KBM-7 (cell line): ENCODE measurements at regions of chr1 and their contacts with region 1.

Region 1: GRCh38 chr1:204806943-204807687 is 63.5 kb upstream of the NFASC start:
- DNase-seq: peak; percentile 94

Region 2: DNA sequence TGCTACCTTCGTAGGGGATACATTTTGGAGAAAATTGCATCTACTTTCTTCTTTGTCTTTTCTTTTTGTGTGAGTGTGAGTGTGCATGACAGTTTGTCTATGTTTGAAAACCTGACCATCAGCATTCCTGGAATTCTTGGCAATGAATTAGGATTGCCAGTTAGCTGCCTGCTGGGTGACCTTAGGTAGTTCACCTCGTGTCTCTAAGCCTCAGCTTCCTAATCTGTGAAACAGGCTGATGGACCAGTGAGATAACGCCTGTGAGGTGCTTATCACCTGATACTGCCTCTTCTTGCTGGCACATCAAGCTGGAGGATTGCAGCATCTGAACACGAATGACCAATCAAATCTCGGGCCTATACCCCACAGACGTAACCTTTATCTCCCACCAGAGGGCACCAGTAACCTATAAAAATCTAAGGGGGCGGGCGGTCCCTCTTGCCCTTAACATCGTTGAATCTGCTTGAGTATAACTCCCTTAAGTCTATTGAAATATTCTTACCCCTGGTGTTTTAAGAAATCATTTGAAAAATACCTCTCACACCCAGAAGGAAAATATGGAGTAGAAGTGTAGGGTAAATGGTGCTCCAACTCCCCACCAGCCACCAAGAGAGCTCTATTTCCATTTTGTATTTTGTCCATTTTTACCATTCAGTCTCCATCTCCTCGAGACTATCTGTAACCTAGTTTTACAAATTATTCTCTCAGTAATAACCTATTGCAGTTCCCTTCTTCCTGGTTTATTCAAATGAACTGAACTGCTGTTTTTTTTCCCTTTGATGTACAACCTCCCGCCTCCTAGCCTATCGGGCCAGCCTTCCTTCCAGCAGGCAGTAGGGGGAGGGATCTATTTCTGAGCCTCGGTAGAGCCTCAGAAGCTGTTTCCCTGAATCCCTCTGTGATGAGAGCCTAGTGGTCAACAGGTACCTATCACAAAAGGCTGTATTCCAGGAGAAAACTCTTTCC is 241.2 kb before region 1 on chr1:
- in situ Hi-C with region 1: loop called (anchors 10 kb)
- DNase-seq: peak; percentile 82

Region 3: GRCh38 chr1:205042911-205043806 is 236.0 kb after region 1 on chr1 and contains the start of gene CNTN2:
- in situ Hi-C with region 1: no loop called
- DNase-seq: no peak

Region 4: GRCh38 chr1:205440476-205441317 is 633.6 kb after region 1 on chr1:
- in situ Hi-C with region 1: no loop called
- DNase-seq: peak; percentile 93